Psoas muscle (tissue), 8 donors: ENCODE measurements at regions of chr4 and their contacts with region 1.

Region 1: DNA sequence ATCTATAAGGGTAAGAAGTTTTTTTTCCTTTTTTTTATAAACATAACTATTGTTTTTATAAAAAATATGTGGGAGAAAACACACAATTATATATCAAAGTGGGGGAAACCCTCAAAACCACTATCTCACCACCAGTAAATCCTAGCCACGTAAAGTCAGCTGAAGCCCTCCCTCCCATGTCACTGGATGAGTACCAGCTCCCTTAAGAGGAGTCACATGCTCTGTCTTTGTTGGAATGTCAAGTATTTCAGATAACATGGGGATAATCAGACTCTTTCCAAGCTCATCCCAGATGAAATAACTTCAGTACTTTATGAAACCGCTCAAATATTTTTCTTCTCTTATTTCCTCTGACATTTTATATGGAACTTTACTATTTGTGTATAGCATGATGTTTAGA is 2.4 kb downstream of the MYOZ2 start:
- DNase-seq: no peak
- ATAC-seq: no peak
- H3K4me3 ChIP-seq: peak overlapping the region; percentile 50
- H3K27ac ChIP-seq: peak overlapping the region; percentile 72
- H3K4me1 ChIP-seq: peaks cover 31% of the 10 kb centered on the region
- H3K27me3 ChIP-seq: no peaks in the 10 kb centered on the region
- CTCF ChIP-seq: no peak

Region 2: GRCh38 chr4:118968005-118968404 is 170.0 kb before region 1 on chr4:
- intact Hi-C with region 1: no loop called
- DNase-seq: peak; percentile 41 to 70
- ATAC-seq: peak; percentile 85 to 88 (median 87)
- H3K4me3 ChIP-seq: peak overlapping the region; percentile 46
- H3K27ac ChIP-seq: peak overlapping the region; percentile 95
- H3K4me1 ChIP-seq: peaks cover 40% of the 10 kb centered on the region
- H3K27me3 ChIP-seq: no peaks in the 10 kb centered on the region
- CTCF ChIP-seq: no peak

Region 3: GRCh38 chr4:119212234-119212963 is 74.4 kb after region 1 on chr4 and contains the start of gene USP53:
- intact Hi-C with region 1: loop called in 1 of 2 experiments (anchors 10 kb)
- DNase-seq: peak; percentile 96 to 98
- ATAC-seq: peak; percentile 93 to 96 (median 96)
- H3K4me3 ChIP-seq: peak within 1 kb of the TSS; percentile 91
- H3K27ac ChIP-seq: peak within 1 kb of the TSS; percentile 99
- H3K4me1 ChIP-seq: peaks cover 23% of the 10 kb centered on the region
- H3K27me3 ChIP-seq: no peaks in the 10 kb centered on the region
- CTCF ChIP-seq: no peak
- total RNA-seq, gene USP53: 43.8 to 89.5 (median 57.3) TPM

Region 4: DNA sequence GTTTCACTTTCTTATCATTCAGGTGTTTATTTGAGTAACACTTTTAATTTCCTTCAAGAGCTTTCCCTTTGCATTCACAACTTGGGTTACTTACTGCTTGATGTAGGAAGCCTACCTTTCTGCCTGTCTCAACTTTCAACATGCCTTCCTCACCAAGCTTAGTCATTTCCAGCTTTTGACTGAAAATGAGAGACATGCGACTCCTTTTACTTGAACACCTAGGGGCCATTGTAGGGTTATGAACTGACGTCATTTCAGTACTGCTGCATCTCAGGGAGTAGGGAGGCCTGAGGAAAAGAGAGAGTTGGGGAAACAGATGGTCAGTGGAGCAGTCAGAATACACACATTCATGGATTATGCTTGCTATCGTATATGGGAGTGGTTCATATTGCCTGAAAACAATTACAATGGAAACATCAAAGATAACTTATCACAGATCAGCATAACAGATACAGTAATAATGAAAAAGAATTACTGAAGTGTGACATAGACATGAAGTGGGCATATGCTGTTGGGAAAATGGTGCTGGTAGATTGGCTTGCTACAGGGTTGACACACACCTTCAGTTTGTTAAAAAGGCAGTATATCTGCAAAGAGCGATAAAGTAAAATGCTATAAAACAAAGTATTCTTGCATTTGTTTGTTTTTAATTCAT is 100.1 kb after region 1 on chr4:
- intact Hi-C with region 1: no loop called
- DNase-seq: no peak
- ATAC-seq: peak in 1 of 4 donors; percentile 21
- H3K4me3 ChIP-seq: no peak overlapping the region
- H3K27ac ChIP-seq: peak overlapping the region; percentile 8
- H3K4me1 ChIP-seq: peaks cover 32% of the 10 kb centered on the region
- H3K27me3 ChIP-seq: no peaks in the 10 kb centered on the region
- CTCF ChIP-seq: no peak

Region 5: GRCh38 chr4:119707336-119707735 is 569.3 kb after region 1 on chr4:
- intact Hi-C with region 1: no loop called
- DNase-seq: no peak
- ATAC-seq: no peak
- H3K4me3 ChIP-seq: no peak overlapping the region
- H3K27ac ChIP-seq: no peak overlapping the region
- H3K4me1 ChIP-seq: no peaks in the 10 kb centered on the region
- H3K27me3 ChIP-seq: no peaks in the 10 kb centered on the region
- CTCF ChIP-seq: no peak